ENCODE measurements at regions of chr10 and their contacts with region 1.

Region 1: DNA sequence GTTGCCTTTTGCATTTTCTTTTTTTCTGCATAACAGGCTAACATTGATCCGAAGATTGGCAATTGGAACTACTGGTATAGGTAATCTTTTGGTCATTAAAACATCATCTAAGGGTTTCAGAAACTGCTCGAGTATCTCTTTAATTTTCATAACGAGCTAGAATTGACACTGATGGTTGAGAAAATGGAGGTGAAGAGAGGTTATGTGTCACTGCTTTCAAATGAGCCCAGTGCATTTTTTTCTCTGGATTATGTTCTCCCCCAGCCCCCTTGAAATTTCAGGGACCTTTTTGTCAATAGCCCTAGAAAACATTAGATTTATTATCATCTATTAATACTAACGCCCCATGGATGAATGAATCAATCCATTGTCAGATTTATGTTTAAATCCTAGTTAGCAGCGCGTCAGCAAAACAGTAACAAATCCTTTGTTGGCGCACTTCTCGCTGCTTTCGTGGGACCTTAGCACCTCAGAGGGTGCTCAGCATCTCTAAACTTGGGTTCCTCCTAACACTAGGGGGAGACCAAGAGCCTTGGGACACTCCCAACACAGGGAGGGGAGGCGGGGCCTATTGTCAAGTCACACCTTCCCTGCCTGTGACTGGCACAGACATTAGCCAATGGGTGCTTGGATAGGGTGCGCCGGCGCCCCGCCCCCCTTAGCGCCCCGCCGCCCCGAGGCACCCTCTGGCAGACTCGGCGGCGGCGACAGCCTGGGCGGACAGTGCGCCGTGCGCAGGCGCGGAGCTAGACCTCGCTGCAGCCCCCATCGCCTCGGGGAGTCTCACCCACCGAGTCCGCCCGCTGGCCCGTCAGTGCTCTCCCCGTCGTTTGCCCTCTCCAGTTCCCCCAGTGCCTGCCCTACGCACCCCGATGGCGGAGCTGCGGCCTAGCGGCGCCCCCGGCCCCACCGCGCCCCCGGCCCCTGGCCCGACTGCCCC is at the start of gene SUFU:
- DNase-seq: peak; percentile 98
- H3K4me3 ChIP-seq: peak within 1 kb of the TSS; percentile 98
- CTCF ChIP-seq: peak; percentile 93

Region 2: GRCh38 chr10:102420810-102421644 is 82.5 kb before region 1 on chr10 and contains the start of gene FBXL15:
- in situ Hi-C with region 1: no loop called
- DNase-seq: peak; percentile 94
- H3K4me3 ChIP-seq: peak within 1 kb of the TSS; percentile 91
- CTCF ChIP-seq: no peak

Region 3: DNA sequence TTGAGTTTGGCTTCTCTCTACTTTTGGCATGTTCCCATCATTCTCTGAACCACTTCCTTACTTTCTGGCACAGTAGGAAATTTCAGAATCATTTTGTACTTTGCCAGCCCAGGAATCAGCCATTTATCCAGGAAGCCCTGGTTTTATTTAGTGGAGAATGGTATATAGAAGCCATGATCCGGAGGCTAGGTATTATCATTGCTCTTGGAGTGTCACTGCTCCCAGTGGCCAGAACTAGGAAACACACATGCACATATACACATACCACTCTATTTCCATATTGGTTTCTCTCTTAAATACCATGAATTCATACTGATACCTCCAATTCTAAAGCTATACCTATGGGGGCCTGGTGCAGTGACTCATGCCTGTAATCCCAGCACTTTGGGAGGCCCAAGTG is 36.5 kb after region 1 on chr10:
- in situ Hi-C with region 1: no loop called
- DNase-seq: peak; percentile 23
- H3K4me3 ChIP-seq: no peak overlapping the region
- CTCF ChIP-seq: peak; percentile 56

Region 4: GRCh38 chr10:102596506-102596971 is 93.0 kb after region 1 on chr10:
- in situ Hi-C with region 1: loop called (anchors 10 kb)
- DNase-seq: peak; percentile 32
- H3K4me3 ChIP-seq: no peak overlapping the region
- CTCF ChIP-seq: peak; percentile 97

Measured in astrocyte of the cerebellum (primary cell).